Activated CD8-positive, alpha-beta T cell treated with anti-CD3 and anti-CD28 coated beads, Interleukin-2, amount 10 ng/mL, durations not matched to agents 7 days and 5 days (primary cell): ENCODE measurements at regions of chr20 and their contacts with region 1.

Region 1: GRCh38 chr20:58236612-58237330 is 8.3 kb upstream of the ANKRD60 start:
- DNase-seq: peak; percentile 86
- ATAC-seq: peak; percentile 90
- H3K4me3 Mint-ChIP-seq: peak overlapping the region; percentile 90
- H3K27ac Mint-ChIP-seq: peak overlapping the region; percentile 91
- H3K4me1 Mint-ChIP-seq: peaks cover 28% of the 10 kb centered on the region
- H3K27me3 Mint-ChIP-seq: no peaks in the 10 kb centered on the region

Region 2: DNA sequence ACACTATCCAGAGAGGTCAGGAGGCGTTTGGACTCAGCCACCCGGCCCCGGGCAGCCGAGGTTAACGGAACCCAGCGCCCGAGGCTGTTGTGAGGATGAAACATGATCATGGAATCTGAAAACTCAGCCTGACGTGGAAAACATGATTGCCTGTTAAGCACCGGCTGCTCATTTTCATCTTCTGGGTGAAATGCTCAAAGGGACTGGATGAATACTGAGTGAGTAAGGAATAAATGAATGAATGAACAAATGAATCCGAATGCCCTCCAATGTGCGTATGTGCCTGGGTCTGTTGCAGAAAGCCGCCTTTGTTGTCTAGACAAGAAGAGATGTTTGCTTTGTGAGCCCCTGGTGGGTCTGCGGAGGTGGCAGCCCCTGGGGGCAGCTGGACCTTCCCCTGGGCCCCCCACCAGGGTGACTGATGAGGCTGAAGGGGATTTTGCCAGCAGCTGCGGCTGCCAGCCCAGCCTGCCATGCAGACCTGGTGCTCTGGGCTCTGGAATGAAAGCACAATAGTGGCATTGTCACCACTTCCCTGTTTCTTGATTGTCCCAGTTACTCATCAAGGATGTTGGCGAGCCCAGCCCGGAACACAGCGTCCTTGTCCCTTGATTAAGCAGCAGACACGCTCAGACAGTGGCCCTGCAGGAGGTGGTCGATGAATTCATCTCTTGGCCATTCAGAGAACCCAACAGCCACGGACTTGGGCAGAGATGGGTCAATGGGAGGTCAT is 219.4 kb before region 1 on chr20:
- CTCF ChIA-PET with region 1: no interaction called
- POLR2A ChIA-PET with region 1: no interaction called
- DNase-seq: no peak
- ATAC-seq: no peak
- H3K4me3 Mint-ChIP-seq: no peak overlapping the region
- H3K27ac Mint-ChIP-seq: no peak overlapping the region
- H3K4me1 Mint-ChIP-seq: peaks cover 10% of the 10 kb centered on the region
- H3K27me3 Mint-ChIP-seq: peaks cover 5% of the 10 kb centered on the region

Region 3: DNA sequence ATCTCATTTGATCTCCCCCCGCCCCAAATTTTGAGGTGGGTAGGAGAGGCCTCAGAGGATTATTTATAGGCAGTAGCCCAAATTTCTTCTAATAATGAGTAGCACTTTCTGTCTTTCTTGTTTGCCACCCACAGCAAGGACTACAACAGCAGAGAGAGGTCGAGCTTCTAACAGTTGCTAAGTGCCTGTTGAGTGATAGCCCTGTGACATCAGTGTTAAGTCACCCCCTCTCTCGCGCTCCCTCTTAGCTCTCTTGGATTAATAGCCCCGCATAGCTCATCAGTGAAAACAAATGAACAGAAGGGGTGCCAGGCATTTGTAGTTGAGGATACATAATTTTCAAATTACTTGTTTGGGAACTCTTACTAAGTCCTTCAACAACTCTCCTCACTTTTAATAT is 11.8 kb before region 1 on chr20:
- CTCF ChIA-PET with region 1: interaction called, 14 read pairs
- POLR2A ChIA-PET with region 1: no interaction called
- DNase-seq: no peak
- ATAC-seq: no peak
- H3K4me3 Mint-ChIP-seq: no peak overlapping the region
- H3K27ac Mint-ChIP-seq: no peak overlapping the region
- H3K4me1 Mint-ChIP-seq: peaks cover 14% of the 10 kb centered on the region
- H3K27me3 Mint-ChIP-seq: peaks cover 57% of the 10 kb centered on the region

Region 4: DNA sequence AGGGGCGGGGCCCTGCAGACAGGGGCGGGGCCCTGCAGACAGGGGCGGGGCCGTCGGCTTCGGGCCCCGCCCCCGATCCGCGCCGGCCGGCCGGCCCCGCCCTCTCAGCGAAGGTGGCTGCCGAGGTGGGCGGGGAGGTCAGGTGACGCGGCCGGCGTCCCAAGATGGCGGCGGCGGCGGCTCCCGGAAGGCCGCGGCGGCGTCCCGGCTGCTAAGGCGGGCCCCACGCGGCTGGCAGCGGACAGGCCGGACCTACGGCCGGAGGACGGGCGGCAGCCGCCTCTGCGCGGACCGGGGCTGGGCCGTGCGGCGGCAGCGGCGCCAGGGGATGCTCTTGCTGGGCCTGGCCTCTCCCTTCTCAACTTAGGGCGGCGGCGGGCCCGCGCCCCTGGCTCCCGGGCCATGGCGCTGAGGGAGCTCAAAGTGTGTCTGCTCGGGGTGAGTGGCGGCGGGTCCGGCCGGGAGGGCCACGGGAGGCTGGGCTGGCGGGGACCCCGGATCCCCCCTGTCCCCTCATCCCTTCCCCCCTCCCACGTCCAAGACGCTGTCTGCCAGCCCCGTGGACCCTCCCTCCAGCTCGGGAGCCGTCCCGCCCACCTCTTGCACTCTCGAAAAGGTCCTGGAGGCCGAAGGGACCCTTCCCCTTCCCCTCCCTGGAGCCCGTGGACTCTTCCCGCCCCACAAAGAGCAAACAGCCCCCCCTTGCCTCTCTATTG is 73.0 kb after region 1 on chr20 and contains the start of gene RAB22A:
- CTCF ChIA-PET with region 1: interaction called, 12 read pairs
- POLR2A ChIA-PET with region 1: interaction called, 4 read pairs
- DNase-seq: peak; percentile 86
- ATAC-seq: peak; percentile 68
- H3K4me3 Mint-ChIP-seq: peak within 1 kb of the TSS; percentile 93
- H3K27ac Mint-ChIP-seq: peak within 1 kb of the TSS; percentile 87
- H3K4me1 Mint-ChIP-seq: peaks cover 65% of the 10 kb centered on the region
- H3K27me3 Mint-ChIP-seq: no peaks in the 10 kb centered on the region
- total RNA-seq, gene RAB22A: 16.0 to 17.3 TPM

Region 5: GRCh38 chr20:58388882-58389323 is 152.1 kb after region 1 on chr20 and contains the start of gene VAPB:
- CTCF ChIA-PET with region 1: interaction called, 10 read pairs
- POLR2A ChIA-PET with region 1: interaction called, 4 read pairs
- DNase-seq: peak; percentile 96
- ATAC-seq: peak; percentile 98
- H3K4me3 Mint-ChIP-seq: peak within 1 kb of the TSS; percentile 88
- H3K27ac Mint-ChIP-seq: peak within 1 kb of the TSS; percentile 95
- H3K4me1 Mint-ChIP-seq: peaks cover 35% of the 10 kb centered on the region
- H3K27me3 Mint-ChIP-seq: peaks cover 8% of the 10 kb centered on the region
- total RNA-seq, gene VAPB: 34.5 to 36.8 TPM

Region 6: DNA sequence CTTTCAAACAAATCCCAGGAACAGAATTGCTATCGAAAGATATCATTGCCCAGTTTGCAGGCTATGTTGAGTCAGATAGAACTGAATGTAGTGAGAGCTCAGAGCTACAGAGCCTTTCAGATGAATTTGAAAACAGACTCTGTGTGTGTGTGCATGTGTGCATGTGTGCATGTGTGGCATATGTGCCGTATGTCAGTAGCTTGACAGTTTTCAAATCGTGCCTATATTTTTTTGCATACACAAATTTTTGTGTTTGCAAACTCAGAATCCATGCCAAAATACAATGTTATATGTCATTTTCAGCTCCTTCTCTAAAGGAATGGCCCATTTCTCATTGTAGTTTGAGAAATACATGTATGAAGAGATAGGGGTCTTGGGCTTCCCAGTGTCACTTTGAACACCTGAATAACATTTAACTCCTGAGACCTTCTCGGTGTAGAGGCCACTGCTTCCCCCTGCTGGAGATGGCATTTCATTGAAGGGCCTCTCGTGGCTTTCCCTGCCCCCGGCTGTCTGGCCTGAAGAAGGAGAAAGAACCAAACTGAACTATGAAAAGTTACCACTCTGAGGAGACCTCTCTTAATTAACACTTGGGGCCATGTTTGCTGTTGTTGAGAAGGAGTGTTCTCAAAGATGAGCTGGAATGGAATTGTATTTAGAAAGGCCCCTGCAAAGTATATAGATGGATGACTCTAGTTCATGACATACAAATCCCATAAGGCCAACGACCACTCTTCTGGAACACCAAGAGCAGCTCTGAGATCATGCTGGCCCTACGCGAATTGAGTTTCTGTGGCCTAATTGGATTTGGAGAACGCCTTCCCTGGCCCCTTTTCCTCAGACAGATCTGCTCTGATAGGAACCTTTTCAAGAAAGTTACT is 211.0 kb after region 1 on chr20:
- CTCF ChIA-PET with region 1: interaction called, 19 read pairs
- POLR2A ChIA-PET with region 1: no interaction called
- DNase-seq: peak; percentile 57
- ATAC-seq: peak; percentile 57
- H3K4me3 Mint-ChIP-seq: no peak overlapping the region
- H3K27ac Mint-ChIP-seq: no peak overlapping the region
- H3K4me1 Mint-ChIP-seq: peaks cover 13% of the 10 kb centered on the region
- H3K27me3 Mint-ChIP-seq: no peaks in the 10 kb centered on the region

Region 7: GRCh38 chr20:58839474-58839874 is 602.7 kb after region 1 on chr20:
- CTCF ChIA-PET with region 1: interaction called, 13 read pairs
- POLR2A ChIA-PET with region 1: no interaction called
- DNase-seq: peak; percentile 61
- ATAC-seq: peak; percentile 71
- H3K4me3 Mint-ChIP-seq: no peak overlapping the region
- H3K27ac Mint-ChIP-seq: no peak overlapping the region
- H3K4me1 Mint-ChIP-seq: peaks cover 52% of the 10 kb centered on the region
- H3K27me3 Mint-ChIP-seq: peaks cover 67% of the 10 kb centered on the region